Common myeloid progenitor, CD34-positive (primary cell): ENCODE measurements at regions of chr1 and their contacts with region 1.

Region 1: GRCh38 chr1:101079341-101079740 is 53.8 kb upstream of the DPH5 start:
- DNase-seq: peak; percentile 85 to 97 (median 95)
- H3K4me3 ChIP-seq: peak overlapping the region in 2 of 7 experiments; percentile 17 to 46
- H3K27ac ChIP-seq: peak overlapping the region; percentile 61 to 76
- H3K4me1 ChIP-seq: peaks cover 26 to 52% (median 30%) of the 10 kb centered on the region in 4 experiments
- H3K27me3 ChIP-seq: no peaks in the 10 kb centered on the region

Region 2: GRCh38 chr1:101065575-101065974 is 13.8 kb before region 1 on chr1:
- CTCF ChIA-PET with region 1: interaction called, 19 read pairs
- POLR2A ChIA-PET with region 1: no interaction called
- DNase-seq: peak in 1 of 3 donors; percentile 44
- H3K4me3 ChIP-seq: peak overlapping the region in 2 of 7 experiments; percentile 16 to 43
- H3K27ac ChIP-seq: peak overlapping the region; percentile 18 to 39
- H3K4me1 ChIP-seq: peaks cover 0 to 16% (median 13%) of the 10 kb centered on the region in 4 experiments
- H3K27me3 ChIP-seq: no peaks in the 10 kb centered on the region